HEK293T (cell line): ENCODE measurements at regions of chr6 and their contacts with region 1.

Region 1: GRCh38 chr6:31068669-31069340 is 43.6 kb downstream of the C6orf15 start:
- DNase-seq: peak; percentile 85

Region 2: GRCh38 chr6:31079656-31080261 is 11.0 kb after region 1 on chr6:
- CTCF ChIA-PET with region 1: interaction called, 12 read pairs
- POLR2A ChIA-PET with region 1: interaction called, 3 read pairs
- DNase-seq: peak; percentile 66

Region 3: GRCh38 chr6:31110825-31111582 is 42.2 kb after region 1 on chr6:
- CTCF ChIA-PET with region 1: no interaction called
- POLR2A ChIA-PET with region 1: no interaction called
- DNase-seq: no peak